ENCODE measurements at regions of chr7 and their contacts with region 1.

Region 1: GRCh38 chr7:83130623-83131545 is 31.8 kb downstream of the PCLO start:
- DNase-seq: no peak
- ATAC-seq: no peak
- H3K4me3 ChIP-seq: no peak overlapping the region
- H3K27ac ChIP-seq: no peak overlapping the region
- H3K4me1 ChIP-seq: no peaks in the 10 kb centered on the region
- H3K27me3 ChIP-seq: no peaks in the 10 kb centered on the region
- CTCF ChIP-seq: no peak

Region 2: DNA sequence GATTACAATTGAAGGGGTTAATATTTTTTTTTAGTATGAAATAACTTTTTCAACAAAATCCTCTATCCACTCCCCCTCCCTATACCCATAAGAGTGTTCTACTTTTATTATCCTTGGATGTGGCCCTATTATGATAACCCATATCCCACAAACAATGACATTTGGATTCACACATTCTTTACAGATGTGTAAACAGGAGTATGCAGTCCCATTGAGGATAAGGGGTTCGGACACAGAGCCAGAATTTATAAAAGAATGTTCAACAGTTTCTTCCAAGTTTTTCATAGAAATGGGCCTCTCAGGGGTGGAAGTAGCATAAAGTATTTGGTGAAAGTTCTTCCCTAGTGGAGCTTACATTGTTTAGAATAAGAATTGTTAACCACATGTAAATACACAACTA is 47.9 kb after region 1 on chr7:
- CTCF ChIA-PET with region 1: no interaction called
- POLR2A ChIA-PET with region 1: no interaction called
- in situ Hi-C with region 1: no loop called
- intact Hi-C with region 1: loop called (anchors 10 kb)
- DNase-seq: no peak
- ATAC-seq: no peak
- H3K4me3 ChIP-seq: no peak overlapping the region
- H3K27ac ChIP-seq: no peak overlapping the region
- H3K4me1 ChIP-seq: no peaks in the 10 kb centered on the region
- H3K27me3 ChIP-seq: no peaks in the 10 kb centered on the region
- CTCF ChIP-seq: no peak

Region 3: GRCh38 chr7:83201355-83201754 is 70.5 kb after region 1 on chr7:
- CTCF ChIA-PET with region 1: no interaction called
- POLR2A ChIA-PET with region 1: no interaction called
- in situ Hi-C with region 1: no loop called
- intact Hi-C with region 1: no loop called
- DNase-seq: no peak
- ATAC-seq: no peak
- H3K4me3 ChIP-seq: no peak overlapping the region
- H3K27ac ChIP-seq: no peak overlapping the region
- H3K4me1 ChIP-seq: no peaks in the 10 kb centered on the region
- H3K27me3 ChIP-seq: no peaks in the 10 kb centered on the region
- CTCF ChIP-seq: no peak

Measured in Panc1 (cell line).